ENCODE measurements at regions of chrX and their contacts with region 1.

Region 1: GRCh38 chrX:119669424-119670037 is 23.4 kb downstream of the SEPTIN6 start:
- DNase-seq: no peak
- ATAC-seq: no peak
- H3K4me3 ChIP-seq: no peak overlapping the region
- H3K4me3 Mint-ChIP-seq: no peak overlapping the region
- H3K27ac ChIP-seq: no peak overlapping the region
- H3K27ac Mint-ChIP-seq: peak overlapping the region; percentile 78
- H3K4me1 ChIP-seq: peaks cover 5 to 32% of the 10 kb centered on the region in 2 experiments
- H3K4me1 Mint-ChIP-seq: peaks cover 44 to 60% (median 48%) of the 10 kb centered on the region in 3 donors
- H3K27me3 ChIP-seq: no peaks in the 10 kb centered on the region
- H3K27me3 Mint-ChIP-seq: no peaks in the 10 kb centered on the region

Region 2: DNA sequence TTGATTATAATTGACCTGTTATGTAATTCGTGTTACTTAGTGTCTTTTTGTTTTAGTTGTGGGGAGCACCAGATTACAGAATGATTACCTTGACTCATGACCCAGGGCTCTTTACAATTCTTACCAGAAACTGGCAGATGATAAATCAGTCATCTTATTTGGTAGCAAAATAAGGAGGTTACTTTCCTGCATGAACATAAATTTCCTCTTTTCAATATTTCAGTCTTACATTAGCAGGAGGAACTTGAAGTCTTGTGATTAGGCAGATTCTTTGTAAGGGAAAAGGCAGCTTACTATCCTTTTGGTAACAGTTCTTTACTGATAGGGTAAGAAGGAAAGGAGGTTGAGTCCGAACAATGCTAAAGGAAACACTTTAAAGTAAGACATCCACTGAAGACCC is 227.2 kb before region 1 on chrX:
- CTCF ChIA-PET with region 1: no interaction called
- POLR2A ChIA-PET with region 1: no interaction called
- DNase-seq: no peak
- ATAC-seq: no peak
- H3K4me3 ChIP-seq: no peak overlapping the region
- H3K4me3 Mint-ChIP-seq: no peak overlapping the region
- H3K27ac ChIP-seq: no peak overlapping the region
- H3K27ac Mint-ChIP-seq: no peak overlapping the region
- H3K4me1 ChIP-seq: no peaks in the 10 kb centered on the region
- H3K4me1 Mint-ChIP-seq: no peaks in the 10 kb centered on the region
- H3K27me3 ChIP-seq: no peaks in the 10 kb centered on the region
- H3K27me3 Mint-ChIP-seq: peaks cover 0 to 6% of the 10 kb centered on the region in 2 donors

Region 3: GRCh38 chrX:119685225-119686066 is 15.9 kb after region 1 on chrX:
- CTCF ChIA-PET with region 1: interaction called in 1 of 2 experiments, 3 read pairs
- POLR2A ChIA-PET with region 1: interaction called, 6 to 15 read pairs
- DNase-seq: peak in 9 of 35 experiments; percentile 23 to 71 (median 39)
- ATAC-seq: peak in 3 of 4 experiments; percentile 10 to 46 (median 11)
- H3K4me3 ChIP-seq: peak overlapping the region; percentile 34 to 38
- H3K4me3 Mint-ChIP-seq: peak overlapping the region; percentile 93 to 96 (median 94)
- H3K27ac ChIP-seq: peak overlapping the region; percentile 99
- H3K27ac Mint-ChIP-seq: peak overlapping the region; percentile 94 to 98
- H3K4me1 ChIP-seq: peaks cover 71 to 88% of the 10 kb centered on the region in 2 experiments
- H3K4me1 Mint-ChIP-seq: peaks cover 77 to 94% (median 86%) of the 10 kb centered on the region in 3 donors
- H3K27me3 ChIP-seq: no peaks in the 10 kb centered on the region
- H3K27me3 Mint-ChIP-seq: no peaks in the 10 kb centered on the region